Transverse colon (tissue), 4 donors: ENCODE measurements at regions of chr12 and their contacts with region 1.

Region 1: GRCh38 chr12:6751767-6752166 is 1.2 kb downstream of the MLF2 start:
- DNase-seq: no peak
- H3K4me3 ChIP-seq: peak overlapping the region in 2 of 4 donors; percentile 86 to 93
- H3K27ac ChIP-seq: peak overlapping the region; percentile 98 to 99 (median 99)
- H3K4me1 ChIP-seq: peaks cover 12 to 22% (median 15%) of the 10 kb centered on the region in 4 donors
- H3K27me3 ChIP-seq: no peaks in the 10 kb centered on the region
- CTCF ChIP-seq: no peak
- EP300 ChIP-seq: no peak
- POLR2A ChIP-seq: no peak

Region 2: GRCh38 chr12:6230321-6231110 is 521.3 kb before region 1 on chr12:
- in situ Hi-C with region 1: no loop called
- intact Hi-C with region 1: no loop called
- DNase-seq: peak; percentile 74
- H3K4me3 ChIP-seq: no peak overlapping the region
- H3K27ac ChIP-seq: peak overlapping the region; percentile 93 to 97 (median 95)
- H3K4me1 ChIP-seq: peaks cover 95 to 100% (median 100%) of the 10 kb centered on the region in 4 donors
- H3K27me3 ChIP-seq: no peaks in the 10 kb centered on the region
- CTCF ChIP-seq: no peak
- EP300 ChIP-seq: peak; percentile 76
- POLR2A ChIP-seq: no peak

Region 3: GRCh38 chr12:6430124-6430989 is 321.4 kb before region 1 on chr12:
- in situ Hi-C with region 1: no loop called
- intact Hi-C with region 1: no loop called
- DNase-seq: peak; percentile 88
- H3K4me3 ChIP-seq: peak overlapping the region in 3 of 4 donors; percentile 6 to 28 (median 12)
- H3K27ac ChIP-seq: peak overlapping the region; percentile 75 to 85 (median 81)
- H3K4me1 ChIP-seq: peaks cover 0 to 19% (median 16%) of the 10 kb centered on the region in 4 donors
- H3K27me3 ChIP-seq: no peaks in the 10 kb centered on the region
- CTCF ChIP-seq: peak in 1 of 5 experiments; percentile 22
- EP300 ChIP-seq: no peak
- POLR2A ChIP-seq: no peak

Region 4: DNA sequence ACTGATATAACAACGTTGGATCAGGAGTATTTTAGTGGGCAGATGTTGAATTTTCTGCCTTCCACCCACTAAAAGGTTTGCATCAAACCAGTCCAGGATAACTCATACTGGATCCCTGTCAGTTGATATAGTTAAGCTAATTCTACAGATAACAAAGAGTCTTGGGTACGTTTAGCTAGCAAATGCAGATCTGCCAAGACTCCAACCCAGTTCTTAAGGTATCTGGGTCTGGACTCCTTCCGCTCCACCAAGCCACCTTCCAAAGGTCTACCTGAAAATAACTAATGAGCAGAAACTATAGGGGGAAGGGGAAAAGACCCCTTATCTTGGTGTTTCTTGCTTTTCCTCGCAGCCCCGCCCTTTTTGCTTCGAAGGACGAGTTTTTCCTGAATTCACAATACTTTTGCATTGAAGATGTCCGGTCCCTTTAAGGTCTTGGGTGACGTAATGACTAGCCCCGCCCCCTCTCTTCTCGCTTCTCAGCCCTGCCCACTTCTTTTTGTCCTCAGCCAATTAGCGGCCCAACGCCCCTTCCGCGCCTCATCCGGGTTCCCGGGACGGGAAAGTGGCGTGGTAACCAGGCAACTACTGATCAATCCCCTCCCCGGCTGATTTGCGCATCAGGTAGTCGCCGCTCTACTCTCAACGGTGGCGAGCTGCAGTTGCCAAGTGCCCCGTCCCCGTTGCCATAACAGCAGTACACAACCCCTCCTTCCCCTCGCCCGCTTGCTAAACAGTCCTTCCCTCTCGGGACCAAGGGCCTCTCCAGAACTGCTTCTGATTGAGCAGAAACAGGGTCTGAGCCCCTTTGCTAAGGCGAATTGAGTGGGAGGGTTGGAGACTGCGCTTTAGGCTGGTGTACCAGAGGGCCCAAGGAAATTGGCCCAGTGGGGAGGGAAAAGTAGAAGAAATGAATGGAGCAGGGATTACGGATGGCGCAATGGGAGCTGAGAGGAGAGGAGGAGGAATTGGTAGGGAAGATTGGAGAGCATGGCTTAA is 152.8 kb after region 1 on chr12 and contains the start of gene LRRC23:
- in situ Hi-C with region 1: no loop called
- intact Hi-C with region 1: loop called (anchors 2 kb)
- DNase-seq: peak; percentile 99
- H3K4me3 ChIP-seq: peak within 1 kb of the TSS; percentile 18 to 74 (median 56)
- H3K27ac ChIP-seq: peak within 1 kb of the TSS; percentile 79 to 87 (median 85)
- H3K4me1 ChIP-seq: peaks cover 4 to 23% (median 20%) of the 10 kb centered on the region in 4 donors
- H3K27me3 ChIP-seq: no peaks in the 10 kb centered on the region
- CTCF ChIP-seq: no peak
- EP300 ChIP-seq: no peak
- POLR2A ChIP-seq: peak; percentile 56
- total RNA-seq, gene LRRC23: 0.60 to 11.3 (median 5.9) TPM in 3 of 4 donors, not detected in the other